Activated B cell treated with CpG ODN at 0.5 μM for 24 hours (primary cell): ENCODE measurements at regions of chr14 and their contacts with region 1.

Region 1: DNA sequence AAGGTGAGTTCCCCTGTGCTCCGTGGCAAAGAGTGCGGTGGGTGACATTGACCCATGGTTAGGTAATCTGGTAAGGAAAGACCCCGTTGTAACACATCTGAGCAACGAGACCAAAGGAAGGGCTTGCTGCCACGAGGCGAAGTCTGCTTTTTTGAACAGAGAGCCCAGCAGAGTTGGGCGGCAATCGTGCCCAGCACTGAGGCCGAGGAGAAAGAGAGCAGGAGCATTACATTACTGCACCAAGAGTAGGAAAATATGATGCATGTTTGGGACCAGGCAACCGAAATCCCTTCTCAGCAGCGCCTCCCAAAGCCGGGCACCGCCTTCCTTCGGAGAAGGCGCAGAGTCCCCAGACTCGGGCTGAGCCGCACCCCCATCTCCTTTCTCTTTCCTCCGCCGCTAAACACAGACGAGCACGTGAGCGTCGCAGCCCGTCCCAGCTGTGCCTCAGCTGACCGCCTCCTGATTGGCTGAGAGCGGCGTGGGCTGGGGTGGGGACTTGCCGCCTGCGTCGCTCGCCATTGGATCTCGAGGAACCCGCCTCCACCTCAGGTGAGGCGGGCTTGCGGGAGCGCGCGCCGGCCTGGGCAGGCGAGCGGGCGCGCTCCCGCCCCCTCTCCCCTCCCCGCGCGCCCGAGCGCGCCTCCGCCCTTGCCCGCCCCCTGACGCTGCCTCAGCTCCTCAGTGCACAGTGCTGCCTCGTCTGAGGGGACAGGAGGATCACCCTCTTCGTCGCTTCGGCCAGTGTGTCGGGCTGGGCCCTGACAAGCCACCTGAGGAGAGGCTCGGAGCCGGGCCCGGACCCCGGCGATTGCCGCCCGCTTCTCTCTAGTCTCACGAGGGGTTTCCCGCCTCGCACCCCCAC is at the start of gene HIF1A:
- DNase-seq: peak; percentile 87
- ATAC-seq: peak; percentile 95
- H3K4me3 Mint-ChIP-seq: peak within 1 kb of the TSS; percentile 97
- H3K27ac Mint-ChIP-seq: peak within 1 kb of the TSS; percentile 95
- H3K4me1 Mint-ChIP-seq: peaks cover 40% of the 10 kb centered on the region
- H3K27me3 Mint-ChIP-seq: no peaks in the 10 kb centered on the region
- CTCF ChIP-seq: no peak
- total RNA-seq, gene HIF1A: 148 and 179 TPM in 2 replicates

Region 2: GRCh38 chr14:61503167-61503801 is 191.8 kb before region 1 on chr14:
- CTCF ChIA-PET with region 1: no interaction called
- POLR2A ChIA-PET with region 1: interaction called, 66 read pairs
- intact Hi-C with region 1: loop called (anchors 1 kb)
- DNase-seq: no peak
- ATAC-seq: peak; percentile 88
- H3K4me3 Mint-ChIP-seq: peak overlapping the region; percentile 82
- H3K27ac Mint-ChIP-seq: peak overlapping the region; percentile 99
- H3K4me1 Mint-ChIP-seq: peaks cover 97% of the 10 kb centered on the region
- H3K27me3 Mint-ChIP-seq: no peaks in the 10 kb centered on the region
- CTCF ChIP-seq: no peak

Region 3: GRCh38 chr14:61636779-61637178 is 58.3 kb before region 1 on chr14:
- CTCF ChIA-PET with region 1: no interaction called
- POLR2A ChIA-PET with region 1: interaction called, 3 read pairs
- intact Hi-C with region 1: loop called (anchors 2 kb)
- DNase-seq: no peak
- ATAC-seq: peak; percentile 74
- H3K4me3 Mint-ChIP-seq: peak overlapping the region; percentile 56
- H3K27ac Mint-ChIP-seq: peak overlapping the region; percentile 69
- H3K4me1 Mint-ChIP-seq: peaks cover 25% of the 10 kb centered on the region
- H3K27me3 Mint-ChIP-seq: no peaks in the 10 kb centered on the region
- CTCF ChIP-seq: no peak

Region 4: GRCh38 chr14:61653507-61653906 is 41.6 kb before region 1 on chr14:
- CTCF ChIA-PET with region 1: no interaction called
- POLR2A ChIA-PET with region 1: no interaction called
- intact Hi-C with region 1: no loop called
- DNase-seq: no peak
- ATAC-seq: no peak
- H3K4me3 Mint-ChIP-seq: no peak overlapping the region
- H3K27ac Mint-ChIP-seq: no peak overlapping the region
- H3K4me1 Mint-ChIP-seq: peaks cover 28% of the 10 kb centered on the region
- H3K27me3 Mint-ChIP-seq: no peaks in the 10 kb centered on the region
- CTCF ChIP-seq: no peak

Region 5: DNA sequence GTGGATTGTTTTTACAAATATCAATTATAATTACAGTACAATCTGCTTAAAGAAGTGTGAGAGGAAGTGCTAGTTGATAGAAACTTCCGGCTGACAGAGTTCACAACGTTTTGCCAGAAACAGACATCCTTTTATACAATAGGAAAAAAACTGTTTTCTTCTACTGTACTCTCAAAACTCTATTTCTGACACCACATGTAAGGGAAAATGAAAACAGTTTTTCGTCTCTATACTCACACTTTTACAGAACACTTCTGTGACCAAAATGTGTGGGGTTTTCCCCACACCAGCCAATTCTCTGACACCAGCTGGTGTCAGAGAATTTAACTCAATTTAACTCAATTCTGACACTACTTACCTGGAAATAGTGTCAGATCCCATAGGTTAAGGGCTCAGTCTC is 24.0 kb before region 1 on chr14:
- CTCF ChIA-PET with region 1: no interaction called
- POLR2A ChIA-PET with region 1: interaction called, 81 read pairs
- intact Hi-C with region 1: loop called (anchors 2 kb)
- DNase-seq: no peak
- ATAC-seq: peak; percentile 68
- H3K4me3 Mint-ChIP-seq: no peak overlapping the region
- H3K27ac Mint-ChIP-seq: no peak overlapping the region
- H3K4me1 Mint-ChIP-seq: peaks cover 11% of the 10 kb centered on the region
- H3K27me3 Mint-ChIP-seq: no peaks in the 10 kb centered on the region
- CTCF ChIP-seq: no peak

Region 6: GRCh38 chr14:61719344-61720293 is 24.6 kb after region 1 on chr14:
- CTCF ChIA-PET with region 1: interaction called, 3 read pairs
- POLR2A ChIA-PET with region 1: interaction called, 55 read pairs
- intact Hi-C with region 1: no loop called
- DNase-seq: no peak
- ATAC-seq: peak; percentile 40
- H3K4me3 Mint-ChIP-seq: peak overlapping the region; percentile 69
- H3K27ac Mint-ChIP-seq: peak overlapping the region; percentile 84
- H3K4me1 Mint-ChIP-seq: peaks cover 83% of the 10 kb centered on the region
- H3K27me3 Mint-ChIP-seq: no peaks in the 10 kb centered on the region
- CTCF ChIP-seq: no peak

Region 7: DNA sequence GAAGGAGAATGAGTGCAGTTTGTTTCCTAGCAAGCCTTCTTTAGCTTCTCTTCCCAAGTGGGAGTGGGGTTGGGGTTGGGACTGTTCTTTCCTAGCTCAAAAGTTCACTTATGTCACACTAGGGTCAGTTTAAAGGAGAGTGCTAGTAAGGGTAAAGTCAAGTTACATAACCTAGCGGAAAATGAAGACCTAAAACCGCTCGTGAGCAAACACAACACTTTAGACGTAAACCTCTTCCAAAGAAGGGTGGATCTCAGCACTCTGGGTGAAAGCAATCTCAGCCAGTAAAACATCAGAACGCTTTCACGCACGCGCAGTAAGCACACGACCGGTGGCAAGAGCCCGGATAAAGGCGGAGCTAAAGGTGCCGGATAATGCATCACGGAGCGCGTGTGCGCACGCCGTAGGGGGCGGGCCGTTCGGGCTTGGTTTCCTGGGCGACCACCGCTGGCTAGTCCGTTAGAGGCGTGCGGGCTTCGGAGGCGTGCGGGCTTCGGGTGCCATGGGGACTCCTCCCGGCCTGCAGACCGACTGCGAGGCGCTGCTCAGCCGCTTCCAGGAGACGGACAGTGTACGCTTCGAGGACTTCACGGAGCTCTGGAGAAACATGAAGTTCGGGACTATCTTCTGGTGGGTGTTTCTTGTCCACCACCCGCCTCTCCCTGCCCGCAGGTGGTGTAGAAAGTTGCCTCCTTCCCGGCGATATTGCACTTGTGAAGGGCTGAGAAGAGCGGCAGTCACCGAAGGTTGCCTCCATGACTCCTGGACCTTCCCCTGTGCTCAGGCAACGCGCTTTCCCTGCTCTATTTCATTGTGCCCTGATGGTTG is 67.1 kb after region 1 on chr14 and contains the start of gene SNAPC1:
- CTCF ChIA-PET with region 1: no interaction called
- POLR2A ChIA-PET with region 1: interaction called, 14 read pairs
- intact Hi-C with region 1: loop called (anchors 1 kb)
- DNase-seq: peak; percentile 90
- ATAC-seq: peak; percentile 98
- H3K4me3 Mint-ChIP-seq: peak within 1 kb of the TSS; percentile 95
- H3K27ac Mint-ChIP-seq: peak within 1 kb of the TSS; percentile 95
- H3K4me1 Mint-ChIP-seq: peaks cover 31% of the 10 kb centered on the region
- H3K27me3 Mint-ChIP-seq: no peaks in the 10 kb centered on the region
- CTCF ChIP-seq: no peak
- total RNA-seq, gene SNAPC1: 5.2 TPM in 2 replicates